ENCODE measurements at regions of chr4 and their contacts with region 1.

Region 1: DNA sequence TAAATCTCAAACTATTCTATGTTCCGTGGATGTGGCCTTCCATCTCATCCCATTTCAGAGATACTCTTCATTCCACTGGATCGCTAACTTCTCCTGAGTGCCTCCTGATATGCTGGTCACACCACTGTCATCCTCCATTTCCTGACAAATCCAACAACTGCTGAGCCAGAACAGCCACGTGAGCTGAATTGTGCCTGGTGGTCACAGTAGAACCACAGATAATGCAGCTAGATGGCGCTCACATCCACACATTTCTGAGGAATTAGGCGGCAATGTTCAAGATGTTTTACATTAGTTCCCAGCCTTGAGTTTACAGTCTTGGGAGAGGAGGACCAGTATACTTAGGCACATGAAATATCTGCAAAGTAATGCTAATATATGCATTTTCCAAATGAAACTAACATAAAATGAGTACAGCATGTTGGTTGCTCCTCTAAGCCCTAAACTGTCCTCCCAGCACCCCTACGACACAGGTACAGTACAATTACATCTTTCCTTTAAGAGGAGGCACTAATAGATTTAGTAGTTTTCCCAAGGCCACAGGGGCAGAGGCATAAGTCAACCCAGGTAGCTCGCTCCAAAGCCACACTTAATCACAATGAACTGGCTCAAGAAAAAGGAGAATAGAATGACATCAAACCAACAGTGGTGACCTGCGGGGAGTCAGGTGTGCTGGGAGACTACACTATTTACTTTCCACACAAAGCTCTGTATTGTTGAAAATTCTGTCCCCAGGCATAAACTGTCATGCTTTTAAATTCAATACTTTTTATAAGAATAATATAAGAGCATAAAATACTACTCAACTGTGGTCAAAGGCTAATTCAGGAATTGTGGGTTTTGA is 134.2 kb downstream of the CHIC2 start:
- DNase-seq: peak; percentile 84 to 89
- H3K4me3 ChIP-seq: no peak overlapping the region
- H3K4me3 Mint-ChIP-seq: no peak overlapping the region
- H3K27ac Mint-ChIP-seq: no peak overlapping the region
- H3K4me1 ChIP-seq: peaks cover 60% of the 10 kb centered on the region
- H3K4me1 Mint-ChIP-seq: peaks cover 21% of the 10 kb centered on the region
- H3K27me3 ChIP-seq: no peaks in the 10 kb centered on the region
- H3K27me3 Mint-ChIP-seq: no peaks in the 10 kb centered on the region
- CTCF ChIP-seq: peak; percentile 65 to 72

Region 2: DNA sequence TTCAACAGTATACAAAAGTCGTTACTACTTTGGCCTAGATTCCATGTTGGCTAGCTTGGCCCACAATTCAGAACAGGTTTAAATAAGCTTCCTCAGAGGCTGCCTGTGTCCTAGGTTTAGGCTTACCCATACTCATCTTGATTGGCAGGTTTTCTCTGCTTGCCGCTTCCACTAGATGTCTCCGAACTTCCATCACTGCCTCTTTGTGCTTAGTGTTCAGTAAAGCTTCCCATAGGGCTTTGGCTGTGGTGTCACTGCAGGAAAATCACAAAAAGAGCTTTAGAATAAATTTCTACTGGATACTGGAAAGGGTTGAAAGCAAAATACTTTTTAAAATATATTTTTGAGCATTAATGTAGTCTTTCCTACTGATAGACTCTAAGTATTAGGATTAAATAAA is 616.7 kb before region 1 on chr4:
- CTCF ChIA-PET with region 1: no interaction called
- POLR2A ChIA-PET with region 1: no interaction called
- intact Hi-C with region 1: loop called (anchors 5 kb)
- DNase-seq: peak; percentile 38 to 48
- H3K4me3 ChIP-seq: no peak overlapping the region
- H3K4me3 Mint-ChIP-seq: no peak overlapping the region
- H3K27ac Mint-ChIP-seq: no peak overlapping the region
- H3K4me1 ChIP-seq: no peaks in the 10 kb centered on the region
- H3K4me1 Mint-ChIP-seq: peaks cover 13% of the 10 kb centered on the region
- H3K27me3 ChIP-seq: no peaks in the 10 kb centered on the region
- H3K27me3 Mint-ChIP-seq: no peaks in the 10 kb centered on the region
- CTCF ChIP-seq: peak in 1 of 2 experiments; percentile 54

Region 3: GRCh38 chr4:53855581-53856250 is 74.5 kb before region 1 on chr4:
- CTCF ChIA-PET with region 1: no interaction called
- POLR2A ChIA-PET with region 1: no interaction called
- intact Hi-C with region 1: no loop called
- DNase-seq: no peak
- H3K4me3 ChIP-seq: no peak overlapping the region
- H3K4me3 Mint-ChIP-seq: no peak overlapping the region
- H3K27ac Mint-ChIP-seq: no peak overlapping the region
- H3K4me1 ChIP-seq: no peaks in the 10 kb centered on the region
- H3K4me1 Mint-ChIP-seq: no peaks in the 10 kb centered on the region
- H3K27me3 ChIP-seq: no peaks in the 10 kb centered on the region
- H3K27me3 Mint-ChIP-seq: no peaks in the 10 kb centered on the region
- CTCF ChIP-seq: no peak

Region 4: DNA sequence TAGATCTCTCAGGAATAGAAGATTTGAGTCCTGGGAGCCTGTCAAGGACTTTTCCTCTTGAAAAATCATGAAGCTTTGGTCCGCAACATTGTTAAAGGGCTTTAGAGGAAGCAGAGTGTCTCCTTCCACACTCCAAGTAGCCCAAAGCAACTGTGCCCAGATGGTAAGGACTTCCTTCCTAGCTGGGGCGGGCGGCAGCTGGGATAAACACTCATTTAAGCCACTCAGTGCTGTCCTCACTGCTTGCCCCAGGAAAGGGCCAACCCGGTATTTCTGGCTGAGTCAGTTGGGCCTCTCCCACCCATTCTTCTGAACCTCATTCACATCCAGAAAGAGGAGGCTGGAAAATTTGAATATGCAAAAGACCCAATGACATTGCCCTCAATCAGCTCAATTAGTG is 10.1 kb before region 1 on chr4:
- CTCF ChIA-PET with region 1: interaction called, 11 read pairs
- POLR2A ChIA-PET with region 1: interaction called, 8 read pairs
- intact Hi-C with region 1: no loop called
- DNase-seq: no peak
- H3K4me3 ChIP-seq: no peak overlapping the region
- H3K4me3 Mint-ChIP-seq: no peak overlapping the region
- H3K27ac Mint-ChIP-seq: peak overlapping the region; percentile 40
- H3K4me1 ChIP-seq: peaks cover 39% of the 10 kb centered on the region
- H3K4me1 Mint-ChIP-seq: peaks cover 40% of the 10 kb centered on the region
- H3K27me3 ChIP-seq: no peaks in the 10 kb centered on the region
- H3K27me3 Mint-ChIP-seq: no peaks in the 10 kb centered on the region
- CTCF ChIP-seq: no peak

Region 5: GRCh38 chr4:54006755-54007154 is 76.6 kb after region 1 on chr4:
- CTCF ChIA-PET with region 1: no interaction called
- POLR2A ChIA-PET with region 1: no interaction called
- intact Hi-C with region 1: loop called (anchors 2 kb)
- DNase-seq: no peak
- H3K4me3 ChIP-seq: no peak overlapping the region
- H3K4me3 Mint-ChIP-seq: peak overlapping the region; percentile 11
- H3K27ac Mint-ChIP-seq: no peak overlapping the region
- H3K4me1 ChIP-seq: peaks cover 57% of the 10 kb centered on the region
- H3K4me1 Mint-ChIP-seq: peaks cover 18% of the 10 kb centered on the region
- H3K27me3 ChIP-seq: no peaks in the 10 kb centered on the region
- H3K27me3 Mint-ChIP-seq: no peaks in the 10 kb centered on the region
- CTCF ChIP-seq: no peak

Region 6: DNA sequence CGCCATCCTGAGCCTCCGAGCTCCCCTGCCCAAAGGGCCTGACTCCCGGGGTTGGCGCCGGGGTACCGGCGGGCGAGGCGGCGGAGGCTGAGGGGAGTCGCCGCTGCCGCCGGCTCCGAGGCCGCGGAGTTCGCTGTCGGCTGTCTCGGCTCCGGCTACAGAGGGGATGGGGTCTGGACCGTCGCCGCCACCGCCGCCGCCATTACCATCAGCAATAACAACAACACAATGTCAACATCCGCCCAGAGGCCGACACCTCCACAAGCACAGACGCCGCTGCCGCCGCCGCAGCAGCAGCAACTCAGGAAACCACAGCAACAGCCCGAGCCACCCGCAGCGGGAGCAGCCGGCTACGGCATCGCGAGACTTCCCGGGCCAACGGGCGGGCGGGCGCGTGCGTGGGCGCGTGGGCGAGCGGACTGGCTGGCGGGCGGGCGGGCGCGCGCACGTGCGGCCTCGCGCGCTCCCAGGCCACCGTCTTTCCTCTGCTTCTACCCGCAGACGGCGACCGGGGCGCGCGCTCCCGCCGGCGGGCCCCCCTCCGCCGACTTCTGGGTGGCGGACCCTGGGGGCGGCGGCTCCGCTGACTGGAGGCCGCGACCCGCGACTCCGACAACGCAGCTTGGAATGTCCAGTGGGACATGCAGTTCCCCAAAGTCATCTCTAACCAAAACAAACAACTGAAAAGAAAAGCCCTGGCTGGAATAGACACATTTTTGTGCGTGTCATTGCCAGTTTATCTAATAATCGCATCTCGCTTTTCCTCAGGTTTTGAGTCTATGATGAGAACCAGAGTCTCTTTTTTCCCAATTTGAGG is 134.3 kb after region 1 on chr4 and contains the start of gene CHIC2:
- CTCF ChIA-PET with region 1: interaction called, 3 read pairs
- POLR2A ChIA-PET with region 1: no interaction called
- intact Hi-C with region 1: loop called (anchors 2 kb)
- DNase-seq: peak; percentile 94 to 96
- H3K4me3 ChIP-seq: peak within 1 kb of the TSS; percentile 92
- H3K4me3 Mint-ChIP-seq: peak within 1 kb of the TSS; percentile 89
- H3K27ac Mint-ChIP-seq: peak within 1 kb of the TSS; percentile 20
- H3K4me1 ChIP-seq: peaks cover 25% of the 10 kb centered on the region
- H3K4me1 Mint-ChIP-seq: peaks cover 40% of the 10 kb centered on the region
- H3K27me3 ChIP-seq: no peaks in the 10 kb centered on the region
- H3K27me3 Mint-ChIP-seq: no peaks in the 10 kb centered on the region
- CTCF ChIP-seq: no peak
- total RNA-seq, gene CHIC2: 24.9 and 30.0 TPM in 2 replicates

Region 7: GRCh38 chr4:54217642-54218495 is 287.7 kb after region 1 on chr4:
- CTCF ChIA-PET with region 1: interaction called, 19 read pairs
- POLR2A ChIA-PET with region 1: interaction called, 4 read pairs
- intact Hi-C with region 1: loop called (anchors 1 kb)
- DNase-seq: peak; percentile 86 to 88
- H3K4me3 ChIP-seq: peak overlapping the region; percentile 38
- H3K4me3 Mint-ChIP-seq: peak overlapping the region; percentile 78
- H3K27ac Mint-ChIP-seq: peak overlapping the region; percentile 85
- H3K4me1 ChIP-seq: peaks cover 53% of the 10 kb centered on the region
- H3K4me1 Mint-ChIP-seq: peaks cover 23% of the 10 kb centered on the region
- H3K27me3 ChIP-seq: no peaks in the 10 kb centered on the region
- H3K27me3 Mint-ChIP-seq: no peaks in the 10 kb centered on the region
- CTCF ChIP-seq: peak; percentile 76 to 78

Region 8: GRCh38 chr4:54233277-54233696 is 303.1 kb after region 1 on chr4:
- CTCF ChIA-PET with region 1: interaction called, 32 read pairs
- POLR2A ChIA-PET with region 1: no interaction called
- intact Hi-C with region 1: loop called (anchors 1 kb)
- DNase-seq: peak; percentile 80 to 87
- H3K4me3 ChIP-seq: peak overlapping the region; percentile 75
- H3K4me3 Mint-ChIP-seq: peak overlapping the region; percentile 87
- H3K27ac Mint-ChIP-seq: no peak overlapping the region
- H3K4me1 ChIP-seq: peaks cover 6% of the 10 kb centered on the region
- H3K4me1 Mint-ChIP-seq: peaks cover 9% of the 10 kb centered on the region
- H3K27me3 ChIP-seq: no peaks in the 10 kb centered on the region
- H3K27me3 Mint-ChIP-seq: no peaks in the 10 kb centered on the region
- CTCF ChIP-seq: peak in 1 of 2 experiments; percentile 77

Measured in Caco-2 (cell line).